CD4-positive, alpha-beta memory T cell (primary cell): ENCODE measurements at regions of chr14 and their contacts with region 1.

Region 1: GRCh38 chr14:102316743-102317563 is 2.6 kb upstream of the ZNF839 start:
- DNase-seq: peak; percentile 90 to 98 (median 95)
- H3K4me3 ChIP-seq: peak overlapping the region; percentile 59 to 76
- H3K4me3 Mint-ChIP-seq: peak overlapping the region; percentile 92 to 99 (median 96)
- H3K27ac ChIP-seq: peak overlapping the region; percentile 52
- H3K27ac Mint-ChIP-seq: peak overlapping the region; percentile 75 to 100 (median 96)
- H3K4me1 ChIP-seq: peaks cover 57% of the 10 kb centered on the region
- H3K4me1 Mint-ChIP-seq: peaks cover 30 to 77% (median 49%) of the 10 kb centered on the region in 4 donors
- H3K27me3 ChIP-seq: no peaks in the 10 kb centered on the region
- H3K27me3 Mint-ChIP-seq: peaks cover 4 to 9% of the 10 kb centered on the region in 2 donors

Region 2: GRCh38 chr14:101964297-101965144 is 352.4 kb before region 1 on chr14 and contains the start of gene DYNC1H1:
- CTCF ChIA-PET with region 1: interaction called, 6 read pairs
- POLR2A ChIA-PET with region 1: interaction called, 4 read pairs
- intact Hi-C with region 1: loop called (anchors 1 kb)
- DNase-seq: peak; percentile 85 to 92 (median 89)
- H3K4me3 ChIP-seq: peak within 1 kb of the TSS; percentile 45 to 82
- H3K4me3 Mint-ChIP-seq: peak within 1 kb of the TSS; percentile 89 to 92 (median 91)
- H3K27ac ChIP-seq: peak within 1 kb of the TSS; percentile 79
- H3K27ac Mint-ChIP-seq: peak within 1 kb of the TSS; percentile 92 to 96 (median 93)
- H3K4me1 ChIP-seq: peaks cover 46% of the 10 kb centered on the region
- H3K4me1 Mint-ChIP-seq: peaks cover 27 to 61% (median 43%) of the 10 kb centered on the region in 4 donors
- H3K27me3 ChIP-seq: no peaks in the 10 kb centered on the region
- H3K27me3 Mint-ChIP-seq: no peaks in the 10 kb centered on the region
- total RNA-seq, gene DYNC1H1: 314 to 318 TPM

Region 3: DNA sequence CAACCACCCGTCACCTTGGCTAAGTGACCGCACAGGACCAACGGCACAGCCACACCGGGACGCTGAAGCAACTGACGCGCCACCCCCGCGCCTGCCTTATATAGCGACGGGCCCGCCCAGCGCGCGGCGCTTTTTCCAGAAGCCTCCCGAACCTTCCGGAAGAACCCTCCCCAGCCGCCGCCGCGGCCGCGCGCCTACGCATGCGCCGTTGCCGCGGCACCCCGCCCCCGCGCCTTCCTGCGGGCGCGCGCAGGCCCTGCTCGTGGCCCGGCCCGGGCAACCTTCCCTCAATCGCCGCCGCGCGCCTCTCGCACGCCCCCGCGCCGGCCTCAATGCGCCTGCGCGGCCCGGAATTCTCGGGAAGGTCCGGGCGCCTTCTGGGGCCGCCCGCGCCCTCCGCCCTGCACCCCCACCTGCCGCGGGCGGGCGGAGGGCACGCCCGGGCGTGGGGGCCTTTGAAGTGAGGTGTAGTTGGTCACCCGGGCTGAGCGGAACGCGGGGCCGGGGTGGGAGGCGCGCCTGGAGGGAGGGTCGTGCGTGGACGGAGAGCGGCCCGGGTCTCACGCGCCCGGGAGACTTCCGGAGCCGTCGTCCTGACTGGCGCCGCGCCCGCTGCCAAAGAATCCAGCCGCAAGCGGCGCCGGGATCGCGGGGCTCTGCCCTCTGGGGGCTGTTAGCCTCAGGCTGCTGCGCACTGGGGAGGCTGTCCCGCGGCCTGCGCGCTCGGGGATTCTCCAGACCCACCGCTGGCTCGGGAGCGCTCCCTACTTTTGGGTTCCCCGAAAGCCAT is 229.8 kb before region 1 on chr14 and contains the start of gene HSP90AA1:
- CTCF ChIA-PET with region 1: interaction called, 7 read pairs
- POLR2A ChIA-PET with region 1: interaction called, 6 read pairs
- intact Hi-C with region 1: loop called (anchors 2 kb)
- DNase-seq: peak; percentile 90 to 95 (median 94)
- H3K4me3 ChIP-seq: peak within 1 kb of the TSS; percentile 80 to 85
- H3K4me3 Mint-ChIP-seq: peak within 1 kb of the TSS; percentile 91 to 99 (median 97)
- H3K27ac ChIP-seq: peak within 1 kb of the TSS; percentile 94
- H3K27ac Mint-ChIP-seq: peak within 1 kb of the TSS; percentile 93 to 99 (median 97)
- H3K4me1 ChIP-seq: peaks cover 51% of the 10 kb centered on the region
- H3K4me1 Mint-ChIP-seq: peaks cover 46 to 68% (median 56%) of the 10 kb centered on the region in 4 donors
- H3K27me3 ChIP-seq: no peaks in the 10 kb centered on the region
- H3K27me3 Mint-ChIP-seq: no peaks in the 10 kb centered on the region
- total RNA-seq, gene HSP90AA1: 275 to 297 TPM

Region 4: DNA sequence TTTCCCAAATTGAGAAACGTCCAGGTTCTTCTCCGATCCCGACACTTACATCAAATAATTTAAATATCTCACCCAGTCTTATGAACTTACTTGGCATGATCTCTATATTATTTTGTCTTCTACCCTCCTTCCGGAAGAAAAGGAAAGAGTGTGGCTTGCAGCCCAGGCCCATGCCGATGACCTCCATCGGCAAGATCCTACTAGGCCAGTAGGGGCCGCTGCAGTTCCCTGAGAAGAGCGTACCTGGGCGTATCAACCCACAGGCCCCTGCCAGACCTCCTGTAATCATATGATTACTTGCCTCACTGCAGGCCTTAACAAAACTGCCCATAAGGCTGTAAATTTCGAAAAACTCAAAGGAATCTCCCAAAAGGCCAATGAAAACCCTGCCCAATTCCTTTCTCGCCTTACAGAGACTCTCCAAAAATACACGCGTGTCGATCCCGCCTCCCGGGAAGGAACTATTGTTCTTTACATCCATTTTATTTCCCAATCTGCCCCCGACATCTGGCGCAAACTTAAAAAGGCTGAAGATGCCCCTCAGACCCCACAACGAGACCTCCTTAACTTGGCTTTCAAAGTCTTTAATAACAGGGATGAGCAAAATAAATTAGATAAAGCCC is 81.6 kb before region 1 on chr14:
- CTCF ChIA-PET with region 1: interaction called, 24 read pairs
- POLR2A ChIA-PET with region 1: no interaction called
- intact Hi-C with region 1: loop called (anchors 1 kb)
- DNase-seq: peak; percentile 62 to 72 (median 67)
- H3K4me3 ChIP-seq: no peak overlapping the region
- H3K4me3 Mint-ChIP-seq: no peak overlapping the region
- H3K27ac ChIP-seq: no peak overlapping the region
- H3K27ac Mint-ChIP-seq: no peak overlapping the region
- H3K4me1 ChIP-seq: no peaks in the 10 kb centered on the region
- H3K4me1 Mint-ChIP-seq: no peaks in the 10 kb centered on the region
- H3K27me3 ChIP-seq: no peaks in the 10 kb centered on the region
- H3K27me3 Mint-ChIP-seq: no peaks in the 10 kb centered on the region

Region 5: GRCh38 chr14:102246071-102246470 is 70.9 kb before region 1 on chr14:
- CTCF ChIA-PET with region 1: no interaction called
- POLR2A ChIA-PET with region 1: no interaction called
- intact Hi-C with region 1: no loop called
- DNase-seq: no peak
- H3K4me3 ChIP-seq: no peak overlapping the region
- H3K4me3 Mint-ChIP-seq: no peak overlapping the region
- H3K27ac ChIP-seq: no peak overlapping the region
- H3K27ac Mint-ChIP-seq: no peak overlapping the region
- H3K4me1 ChIP-seq: no peaks in the 10 kb centered on the region
- H3K4me1 Mint-ChIP-seq: no peaks in the 10 kb centered on the region
- H3K27me3 ChIP-seq: no peaks in the 10 kb centered on the region
- H3K27me3 Mint-ChIP-seq: no peaks in the 10 kb centered on the region

Region 6: DNA sequence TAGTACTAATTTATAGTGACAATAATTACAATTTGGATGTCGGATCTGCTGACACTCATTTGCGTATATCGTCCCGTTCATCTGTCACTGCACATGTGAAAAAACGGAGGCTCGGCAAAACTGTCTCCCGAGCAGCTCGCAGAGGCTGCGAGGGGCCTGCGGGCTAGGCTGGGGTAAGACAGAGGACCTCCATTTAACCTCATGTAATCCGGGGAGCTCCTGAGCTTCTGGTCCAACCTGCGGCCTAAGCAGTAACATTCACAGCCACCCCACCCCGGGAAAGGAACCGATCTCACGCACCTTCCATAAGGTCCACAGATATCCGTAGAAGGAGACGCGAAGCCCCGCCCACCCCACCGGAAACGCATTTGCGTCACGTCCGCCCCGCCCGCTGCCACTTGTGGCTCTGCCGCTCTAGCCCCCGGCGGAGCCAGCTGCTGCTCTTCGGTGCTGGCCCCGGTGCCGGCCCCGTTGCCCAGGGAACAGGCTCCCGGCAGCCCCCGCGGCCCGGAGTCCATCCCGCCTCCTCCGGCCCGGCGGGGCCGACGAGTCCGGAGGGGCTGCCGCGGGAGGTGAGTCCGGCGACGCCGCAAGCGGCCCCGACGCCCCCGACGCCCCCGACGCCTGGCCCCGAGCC is 45.7 kb after region 1 on chr14 and contains the starts of genes CINP and TECPR2:
- CTCF ChIA-PET with region 1: interaction called, 3 read pairs
- POLR2A ChIA-PET with region 1: interaction called, 24 read pairs
- intact Hi-C with region 1: loop called (anchors 1 kb)
- DNase-seq: peak; percentile 91 to 97 (median 93)
- H3K4me3 ChIP-seq: peak within 1 kb of the TSS; percentile 80 to 95
- H3K4me3 Mint-ChIP-seq: peak within 1 kb of the TSS in 7 of 8 donors; percentile 94 to 98 (median 97)
- H3K27ac ChIP-seq: peak within 1 kb of the TSS; percentile 87
- H3K27ac Mint-ChIP-seq: peak within 1 kb of the TSS; percentile 93 to 99 (median 98)
- H3K4me1 ChIP-seq: peaks cover 33% of the 10 kb centered on the region
- H3K4me1 Mint-ChIP-seq: peaks cover 19 to 39% (median 26%) of the 10 kb centered on the region in 4 donors
- H3K27me3 ChIP-seq: no peaks in the 10 kb centered on the region
- H3K27me3 Mint-ChIP-seq: no peaks in the 10 kb centered on the region
- total RNA-seq, gene CINP: 31.5 to 32.3 TPM
- total RNA-seq, gene TECPR2: 9.9 to 12.6 TPM